ENCODE measurements at regions of chr2 and their contacts with region 1.

Region 1: DNA sequence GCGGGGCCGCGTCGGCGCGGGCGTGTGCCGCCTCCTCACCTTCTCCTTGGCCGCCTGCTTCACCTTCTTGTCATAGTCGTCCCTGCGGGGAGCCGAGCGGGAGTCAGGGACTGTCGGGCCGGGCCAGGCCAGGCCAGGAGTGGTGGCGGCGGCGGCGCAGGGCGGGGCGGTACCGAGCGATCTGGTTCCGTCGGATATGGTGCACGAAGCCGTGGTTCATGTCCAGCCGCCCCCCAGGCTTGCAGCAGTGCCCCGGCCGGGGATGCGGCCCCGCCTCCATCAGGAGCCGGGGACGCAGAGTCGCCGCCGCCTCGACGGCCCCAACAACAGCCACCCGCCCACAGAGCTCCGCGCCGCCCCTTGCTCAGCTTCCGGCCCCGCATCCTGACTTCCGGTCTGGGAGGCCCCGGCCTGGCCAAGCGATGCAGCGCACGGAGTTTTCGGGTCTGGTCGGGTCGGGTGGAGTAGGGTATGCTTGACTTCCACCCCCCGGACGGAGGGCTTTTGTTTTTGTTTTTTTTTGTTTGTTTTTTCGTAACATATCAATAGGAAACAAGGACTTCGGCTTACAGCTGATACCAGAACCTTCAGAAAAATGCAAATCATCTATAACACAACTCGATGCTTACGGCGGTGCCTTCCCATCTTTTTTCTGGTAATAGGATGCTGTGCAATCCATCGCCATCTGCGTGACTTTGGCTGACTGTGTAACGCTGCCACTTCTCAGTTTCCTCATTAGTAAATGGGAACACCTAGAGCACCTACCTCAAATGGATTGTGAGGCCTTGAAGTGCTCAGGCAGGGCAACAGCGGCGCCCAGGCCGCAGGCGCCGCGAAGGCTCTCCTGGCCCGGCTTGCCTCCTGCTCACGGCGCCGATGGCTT is at the start of gene C2orf68:
- DNase-seq: peak; percentile 84 to 95
- H3K4me3 ChIP-seq: peak within 1 kb of the TSS; percentile 86
- H3K4me1 ChIP-seq: peaks cover 11% of the 10 kb centered on the region
- H3K27me3 ChIP-seq: no peaks in the 10 kb centered on the region

Region 2: DNA sequence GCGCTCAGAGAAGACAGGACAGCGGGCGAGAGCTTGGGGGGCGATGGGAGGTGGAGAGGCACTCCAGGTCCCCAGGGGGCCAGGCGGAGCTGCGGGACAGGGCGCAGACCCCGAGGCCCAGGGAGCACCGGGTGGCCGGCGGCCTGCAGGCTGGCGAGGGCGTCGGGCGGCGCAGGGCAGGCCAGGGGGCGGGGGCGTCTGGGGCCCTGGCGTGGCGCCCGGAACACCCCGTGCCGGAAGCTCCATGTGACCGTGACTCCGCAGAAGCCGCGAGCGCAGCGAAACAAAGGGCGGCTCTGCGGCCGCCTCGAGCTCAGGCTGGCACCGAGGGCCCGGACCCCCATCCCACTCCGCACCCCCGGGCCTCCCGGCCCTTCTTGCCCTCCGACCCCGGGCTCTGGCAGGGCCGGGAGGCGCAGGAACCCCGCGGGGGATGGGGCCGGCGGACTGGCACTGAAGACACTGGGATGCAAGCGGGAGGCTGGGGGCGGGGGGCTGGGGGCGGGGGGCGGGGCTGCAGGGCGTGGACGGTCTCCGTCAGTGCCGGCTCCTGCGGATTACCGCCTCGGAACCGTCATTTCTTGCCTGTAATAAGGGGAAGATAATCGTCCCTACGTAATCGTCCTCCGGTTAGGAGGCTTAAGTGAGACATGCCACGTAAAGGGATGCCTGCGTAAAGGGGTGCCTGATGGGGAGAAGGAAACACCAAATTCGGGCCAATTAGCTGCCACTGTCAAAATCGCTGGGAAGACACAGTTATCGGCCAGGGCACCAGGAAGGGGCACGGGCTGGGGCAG is 174.3 kb before region 1 on chr2:
- in situ Hi-C with region 1: loop called (anchors 10 kb)
- DNase-seq: peak; percentile 75 to 86
- H3K4me3 ChIP-seq: peak overlapping the region; percentile 29
- H3K4me1 ChIP-seq: peaks cover 15% of the 10 kb centered on the region
- H3K27me3 ChIP-seq: no peaks in the 10 kb centered on the region